ENCODE measurements at regions of chr15 and their contacts with region 1.

Region 1: DNA sequence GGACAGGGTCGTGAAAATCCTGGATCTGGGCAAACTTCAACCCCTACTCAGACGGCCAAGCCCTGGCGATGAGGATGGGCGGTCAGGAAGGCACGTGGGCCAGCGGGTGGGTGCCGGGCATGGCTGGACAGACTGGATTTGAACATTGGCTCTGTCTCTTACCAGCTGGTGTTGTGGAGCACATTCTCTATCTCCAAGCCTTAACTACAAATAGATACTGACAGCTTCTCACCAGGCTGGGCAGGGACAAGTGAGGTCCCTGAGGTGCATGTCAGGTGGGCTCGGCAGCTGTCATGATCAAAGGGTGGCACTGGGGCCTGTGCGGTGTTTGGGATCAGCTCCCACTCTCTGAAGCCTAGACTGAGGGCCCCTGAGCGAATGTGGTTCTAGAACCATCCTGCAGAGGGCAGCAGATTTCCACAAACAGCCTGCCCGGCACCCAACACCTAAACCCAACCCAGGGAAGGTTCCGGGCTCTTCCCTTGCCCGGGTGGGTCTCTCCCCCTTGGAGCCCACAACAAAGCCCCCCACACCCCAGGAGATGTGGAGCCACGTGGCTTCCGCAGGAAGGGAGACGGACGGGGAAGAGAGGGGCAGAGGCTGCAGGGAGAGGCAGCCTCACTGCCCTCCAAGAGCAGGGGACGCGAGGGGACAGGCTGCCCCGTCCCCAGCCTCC is 58.4 kb downstream of the RGMA start:
- DNase-seq: no peak
- ATAC-seq: peak; percentile 70

Region 2: GRCh38 chr15:93072411-93073394 is 42.1 kb after region 1 on chr15:
- intact Hi-C with region 1: loop called (anchors 5 kb)
- DNase-seq: peak; percentile 90
- ATAC-seq: peak; percentile 89

Region 3: GRCh38 chr15:93126599-93126998 is 96.0 kb after region 1 on chr15:
- intact Hi-C with region 1: no loop called
- DNase-seq: peak; percentile 87
- ATAC-seq: peak; percentile 82

Region 4: GRCh38 chr15:93974804-93975481 is 944.4 kb after region 1 on chr15:
- intact Hi-C with region 1: loop called (anchors 5 kb)
- DNase-seq: no peak
- ATAC-seq: peak; percentile 62

Region 5: GRCh38 chr15:94119923-94120775 is 1089.6 kb after region 1 on chr15:
- intact Hi-C with region 1: loop called (anchors 1 kb)
- DNase-seq: no peak
- ATAC-seq: peak; percentile 96